ENCODE measurements at regions of chr15 and their contacts with region 1.

Region 1: DNA sequence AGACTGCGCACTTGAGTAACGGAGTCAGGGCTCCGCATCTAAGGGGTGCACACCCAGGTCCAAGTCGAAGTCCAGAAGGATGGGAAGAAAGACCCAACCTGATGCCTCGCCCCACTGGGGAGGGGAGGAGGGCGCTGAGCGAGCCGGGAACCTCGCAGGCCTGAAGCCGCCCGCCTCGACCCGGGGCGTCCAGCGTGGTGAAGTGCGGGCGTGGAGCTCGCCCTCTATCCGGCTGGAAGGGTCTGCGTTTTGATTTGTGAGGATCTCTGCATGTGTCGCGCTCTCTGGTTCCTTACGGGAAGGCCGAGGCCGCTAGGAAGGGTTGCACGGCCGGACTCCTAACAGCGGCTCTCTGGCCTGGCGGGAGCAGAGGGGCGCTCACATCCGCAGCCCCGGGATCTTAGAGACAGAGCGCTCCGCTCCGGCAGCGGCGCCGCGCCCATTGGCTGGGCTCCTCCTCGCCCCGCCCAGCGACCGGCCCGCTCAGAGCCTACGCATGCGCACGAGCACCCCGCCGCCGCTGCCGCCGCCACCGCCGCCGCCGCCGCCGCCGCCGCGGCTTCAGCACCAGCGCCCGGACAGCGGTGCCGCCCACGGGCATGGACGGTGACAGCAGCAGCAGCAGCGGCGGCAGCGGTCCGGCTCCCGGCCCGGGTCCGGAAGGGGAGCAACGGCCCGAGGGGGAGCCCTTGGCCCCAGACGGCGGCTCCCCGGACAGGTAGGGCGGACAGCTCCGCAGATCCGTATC is at the start of gene DISP2:
- DNase-seq: no peak
- ATAC-seq: peak; percentile 93
- H3K4me3 ChIP-seq: peak within 1 kb of the TSS; percentile 58 to 67
- H3K27ac ChIP-seq: peak within 1 kb of the TSS; percentile 66
- H3K4me1 ChIP-seq: peaks cover 7% of the 10 kb centered on the region
- H3K27me3 ChIP-seq: no peaks in the 10 kb centered on the region
- CTCF ChIP-seq: no peak
- total RNA-seq, gene DISP2: 10.0 TPM

Region 2: GRCh38 chr15:40029979-40030893 is 327.7 kb before region 1 on chr15:
- CTCF ChIA-PET with region 1: no interaction called
- POLR2A ChIA-PET with region 1: no interaction called
- in situ Hi-C with region 1: no loop called
- intact Hi-C with region 1: no loop called
- DNase-seq: no peak
- ATAC-seq: peak; percentile 86
- H3K4me3 ChIP-seq: no peak overlapping the region
- H3K27ac ChIP-seq: no peak overlapping the region
- H3K4me1 ChIP-seq: no peaks in the 10 kb centered on the region
- H3K27me3 ChIP-seq: no peaks in the 10 kb centered on the region
- CTCF ChIP-seq: peak; percentile 84

Region 3: GRCh38 chr15:40330368-40330836 is 27.5 kb before region 1 on chr15:
- CTCF ChIA-PET with region 1: no interaction called
- POLR2A ChIA-PET with region 1: no interaction called
- in situ Hi-C with region 1: no loop called
- intact Hi-C with region 1: no loop called
- DNase-seq: no peak
- ATAC-seq: peak; percentile 17
- H3K4me3 ChIP-seq: no peak overlapping the region
- H3K27ac ChIP-seq: peak overlapping the region; percentile 42
- H3K4me1 ChIP-seq: peaks cover 13% of the 10 kb centered on the region; the same call in 1 of the 2 replicates
- H3K27me3 ChIP-seq: no peaks in the 10 kb centered on the region
- CTCF ChIP-seq: no peak

Region 4: GRCh38 chr15:40449275-40449674 is 91.4 kb after region 1 on chr15:
- CTCF ChIA-PET with region 1: interaction called, 10 read pairs
- POLR2A ChIA-PET with region 1: no interaction called
- in situ Hi-C with region 1: no loop called
- intact Hi-C with region 1: no loop called
- DNase-seq: no peak
- ATAC-seq: no peak
- H3K4me3 ChIP-seq: no peak overlapping the region
- H3K27ac ChIP-seq: no peak overlapping the region
- H3K4me1 ChIP-seq: peaks cover 49% of the 10 kb centered on the region
- H3K27me3 ChIP-seq: no peaks in the 10 kb centered on the region
- CTCF ChIP-seq: no peak

Measured in Panc1 (cell line).